ENCODE measurements at regions of chr14 and their contacts with region 1.

Region 1: GRCh38 chr14:30443368-30444007 is 115.5 kb upstream of the G2E3 start:
- DNase-seq: peak; percentile 73
- ATAC-seq: peak; percentile 67
- H3K4me3 ChIP-seq: no peak overlapping the region
- H3K27ac ChIP-seq: no peak overlapping the region
- H3K4me1 ChIP-seq: no peaks in the 10 kb centered on the region
- H3K27me3 ChIP-seq: peaks cover 44% of the 10 kb centered on the region
- CTCF ChIP-seq: peak; percentile 82

Region 2: DNA sequence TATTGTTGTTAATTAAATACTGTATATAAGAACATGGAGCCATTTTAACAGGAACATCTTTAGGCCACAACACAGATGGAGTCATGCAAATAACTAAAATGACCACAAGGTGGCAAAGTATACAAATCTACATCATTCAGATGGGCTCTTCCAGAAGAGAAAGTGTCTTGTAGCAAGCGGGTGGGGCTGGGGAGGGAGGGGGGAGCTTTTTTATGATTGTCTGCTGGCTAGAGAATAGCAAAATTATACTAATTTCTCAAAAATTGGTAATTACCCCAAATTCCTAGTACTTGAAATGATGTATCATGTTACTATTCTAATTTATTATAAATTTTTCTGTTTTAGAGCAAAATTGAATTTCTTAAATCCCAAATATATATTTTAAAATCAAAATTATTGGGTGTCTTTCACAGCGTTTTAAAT is 894.5 kb before region 1 on chr14:
- CTCF ChIA-PET with region 1: no interaction called
- POLR2A ChIA-PET with region 1: no interaction called
- intact Hi-C with region 1: loop called (anchors 2 kb)
- DNase-seq: peak; percentile 77
- ATAC-seq: peak; percentile 89
- H3K4me3 ChIP-seq: no peak overlapping the region
- H3K27ac ChIP-seq: no peak overlapping the region
- H3K4me1 ChIP-seq: no peaks in the 10 kb centered on the region
- H3K27me3 ChIP-seq: peaks cover 7% of the 10 kb centered on the region; the same call in 1 of the 2 replicates
- CTCF ChIP-seq: peak; percentile 71

Region 3: DNA sequence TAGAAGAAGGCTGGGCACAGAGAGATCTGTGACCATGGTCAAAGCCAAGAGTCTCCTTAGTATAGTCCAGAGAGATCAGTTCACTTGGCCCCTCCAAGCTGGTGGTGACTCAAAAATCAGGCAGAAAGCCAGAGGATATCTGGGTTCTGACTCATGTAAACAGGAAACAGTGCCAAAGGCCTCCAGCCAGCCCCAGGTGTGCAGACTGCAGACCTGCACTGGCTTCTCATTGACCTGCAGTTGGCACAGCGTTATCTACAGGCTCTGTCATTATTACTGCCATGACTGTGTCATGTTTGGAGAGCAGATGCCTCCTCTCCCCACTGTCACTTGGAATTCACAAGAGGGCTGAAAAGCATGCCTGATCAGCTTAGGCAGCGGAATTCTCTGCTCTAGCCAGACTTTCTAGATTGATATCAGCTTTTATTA is 220.1 kb before region 1 on chr14:
- CTCF ChIA-PET with region 1: no interaction called
- POLR2A ChIA-PET with region 1: no interaction called
- intact Hi-C with region 1: loop called (anchors 10 kb)
- DNase-seq: peak; percentile 99
- ATAC-seq: peak; percentile 93
- H3K4me3 ChIP-seq: 0 out of 2 replicates have a peak overlapping the region, but pooled peaks have one; percentile 7
- H3K27ac ChIP-seq: peak overlapping the region; percentile 47
- H3K4me1 ChIP-seq: peaks cover 47% of the 10 kb centered on the region
- H3K27me3 ChIP-seq: no peaks in the 10 kb centered on the region
- CTCF ChIP-seq: no peak

Region 4: DNA sequence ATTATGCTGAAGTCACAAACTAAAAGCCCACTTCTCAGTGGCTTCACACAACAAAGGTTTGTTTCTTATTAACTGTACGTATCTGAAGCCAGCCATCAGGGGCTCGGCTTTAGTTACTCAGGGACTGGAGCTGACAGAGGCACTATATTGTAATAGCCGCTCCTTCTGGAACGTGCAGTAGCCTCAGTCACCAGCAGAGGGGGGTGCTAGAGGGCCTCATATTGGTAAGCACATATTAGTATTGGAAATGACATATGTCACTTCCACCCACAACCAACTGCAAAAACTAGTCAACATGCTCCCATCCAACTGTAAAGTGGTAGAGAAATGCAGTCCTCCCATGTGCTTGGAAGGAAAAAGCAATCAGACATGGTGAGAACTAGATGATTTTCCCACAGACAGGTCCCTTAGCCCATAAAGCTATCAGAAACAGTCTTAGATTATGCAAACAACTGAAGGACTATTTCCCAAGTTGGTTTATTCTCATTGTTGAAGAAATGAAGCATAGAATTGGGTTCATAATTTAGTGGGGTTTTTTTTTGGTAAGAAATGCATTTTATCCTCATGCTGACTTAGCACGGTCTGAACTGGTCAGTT is 68.1 kb before region 1 on chr14:
- CTCF ChIA-PET with region 1: interaction called, 3 read pairs
- POLR2A ChIA-PET with region 1: no interaction called
- intact Hi-C with region 1: loop called (anchors 1 kb)
- DNase-seq: peak; percentile 78
- ATAC-seq: peak; percentile 99
- H3K4me3 ChIP-seq: no peak overlapping the region
- H3K27ac ChIP-seq: no peak overlapping the region
- H3K4me1 ChIP-seq: no peaks in the 10 kb centered on the region
- H3K27me3 ChIP-seq: peaks cover 22% of the 10 kb centered on the region
- CTCF ChIP-seq: peak; percentile 88

Region 5: DNA sequence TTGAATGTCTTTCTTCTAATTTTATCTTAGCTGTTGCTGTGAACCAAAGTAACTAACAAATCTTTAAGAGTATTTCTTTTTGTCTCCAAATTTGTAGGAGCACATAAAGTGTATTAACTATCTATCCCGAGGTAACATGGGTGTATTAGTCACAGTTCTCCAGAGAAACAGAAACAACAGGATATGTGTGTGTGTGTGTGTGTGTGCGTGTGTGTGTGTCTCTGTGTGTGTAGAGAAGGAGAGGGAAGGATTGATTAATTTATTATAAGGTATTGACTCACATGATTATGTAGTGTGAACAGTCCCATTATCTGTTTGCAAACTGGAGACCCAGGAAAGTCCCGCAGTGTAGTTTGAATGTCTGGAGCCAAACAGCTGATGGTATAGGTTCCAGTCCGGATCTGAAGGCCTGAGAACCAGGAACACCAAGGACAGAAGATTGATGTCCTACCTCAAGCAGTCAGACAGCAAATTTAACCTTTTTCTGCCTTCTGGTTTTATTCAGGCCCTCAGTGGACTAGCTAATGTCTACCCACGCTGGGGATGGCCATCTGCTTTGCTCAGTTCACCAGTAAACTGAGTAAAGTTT is 129.8 kb after region 1 on chr14:
- CTCF ChIA-PET with region 1: no interaction called
- POLR2A ChIA-PET with region 1: no interaction called
- intact Hi-C with region 1: no loop called
- DNase-seq: peak; percentile 37
- ATAC-seq: peak; percentile 42
- H3K4me3 ChIP-seq: no peak overlapping the region
- H3K27ac ChIP-seq: no peak overlapping the region
- H3K4me1 ChIP-seq: peaks cover 7% of the 10 kb centered on the region; the same call in 1 of the 2 replicates
- H3K27me3 ChIP-seq: no peaks in the 10 kb centered on the region
- CTCF ChIP-seq: no peak

Region 6: DNA sequence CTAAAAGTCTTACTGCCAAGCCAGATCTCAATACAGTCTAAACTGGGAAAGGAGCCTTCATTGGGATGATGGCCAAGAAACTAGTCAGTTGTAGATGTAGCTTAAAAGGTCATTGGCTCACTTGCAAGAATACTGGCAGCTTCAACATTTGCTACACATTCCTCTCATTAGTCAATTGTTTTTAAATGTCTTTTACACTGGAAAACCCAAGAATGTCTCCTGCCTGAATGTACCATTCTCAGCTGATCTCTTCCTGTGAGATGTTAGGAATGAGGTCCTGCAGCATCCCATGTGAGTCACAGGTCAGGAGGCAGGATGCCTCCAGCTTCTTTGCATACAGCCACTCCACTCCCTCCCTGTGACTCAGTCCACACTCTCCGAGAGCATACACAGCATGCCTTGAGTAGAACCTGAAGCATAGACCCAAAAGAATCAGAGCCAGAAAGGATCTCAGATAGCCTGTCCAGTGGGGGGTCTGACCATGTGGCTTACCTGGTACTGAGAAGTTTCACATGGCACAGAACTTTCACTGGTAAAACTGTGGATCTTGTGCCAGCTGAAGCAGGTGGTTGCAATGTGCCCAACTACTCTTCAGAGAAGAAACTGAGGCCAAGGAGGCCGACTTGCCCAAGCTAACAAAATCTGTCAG is 820.1 kb after region 1 on chr14:
- CTCF ChIA-PET with region 1: no interaction called
- POLR2A ChIA-PET with region 1: no interaction called
- intact Hi-C with region 1: no loop called
- DNase-seq: peak; percentile 97
- ATAC-seq: peak; percentile 99
- H3K4me3 ChIP-seq: no peak overlapping the region
- H3K27ac ChIP-seq: peak overlapping the region; percentile 51
- H3K4me1 ChIP-seq: peaks cover 44% of the 10 kb centered on the region
- H3K27me3 ChIP-seq: no peaks in the 10 kb centered on the region
- CTCF ChIP-seq: no peak

Measured in PC-3 (cell line).